ENCODE measurements at regions of chr5 and their contacts with region 1.

Region 1: GRCh38 chr5:96601811-96602244 is 60.3 kb upstream of the CAST start:
- DNase-seq: no peak
- H3K4me3 ChIP-seq: no peak overlapping the region
- H3K27me3 ChIP-seq: no peaks in the 10 kb centered on the region; the same call in 1 of the 2 replicates
- CTCF ChIP-seq: peak; percentile 76

Region 2: DNA sequence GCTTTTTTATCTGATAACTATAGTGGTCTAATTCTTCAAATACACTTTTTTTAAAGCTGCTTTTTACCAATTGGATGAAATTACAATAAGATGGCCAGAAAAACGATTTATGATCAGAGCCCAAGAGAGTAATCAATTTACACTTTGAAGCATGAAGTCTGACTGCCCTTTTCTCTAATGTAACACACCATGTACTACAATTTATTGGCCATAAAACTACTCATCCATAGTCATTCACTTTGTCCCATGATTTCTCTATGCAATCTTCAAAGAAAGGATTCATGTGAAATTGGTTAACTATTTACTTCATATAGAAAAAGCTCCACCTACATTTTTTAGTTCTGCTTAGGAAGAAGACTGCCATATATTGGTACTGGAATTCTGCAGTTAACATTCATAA is 13.3 kb before region 1 on chr5:
- CTCF ChIA-PET with region 1: interaction called, 20 read pairs
- POLR2A ChIA-PET with region 1: no interaction called
- DNase-seq: no peak
- H3K4me3 ChIP-seq: no peak overlapping the region
- H3K27me3 ChIP-seq: no peaks in the 10 kb centered on the region
- CTCF ChIP-seq: no peak

Region 3: GRCh38 chr5:96651948-96652753 is 50.3 kb after region 1 on chr5:
- CTCF ChIA-PET with region 1: no interaction called
- POLR2A ChIA-PET with region 1: no interaction called
- DNase-seq: no peak
- H3K4me3 ChIP-seq: no peak overlapping the region
- H3K27me3 ChIP-seq: no peaks in the 10 kb centered on the region
- CTCF ChIP-seq: peak; percentile 35

Measured in BJ (cell line).